ENCODE measurements at regions of chr19 and their contacts with region 1.

Region 1: DNA sequence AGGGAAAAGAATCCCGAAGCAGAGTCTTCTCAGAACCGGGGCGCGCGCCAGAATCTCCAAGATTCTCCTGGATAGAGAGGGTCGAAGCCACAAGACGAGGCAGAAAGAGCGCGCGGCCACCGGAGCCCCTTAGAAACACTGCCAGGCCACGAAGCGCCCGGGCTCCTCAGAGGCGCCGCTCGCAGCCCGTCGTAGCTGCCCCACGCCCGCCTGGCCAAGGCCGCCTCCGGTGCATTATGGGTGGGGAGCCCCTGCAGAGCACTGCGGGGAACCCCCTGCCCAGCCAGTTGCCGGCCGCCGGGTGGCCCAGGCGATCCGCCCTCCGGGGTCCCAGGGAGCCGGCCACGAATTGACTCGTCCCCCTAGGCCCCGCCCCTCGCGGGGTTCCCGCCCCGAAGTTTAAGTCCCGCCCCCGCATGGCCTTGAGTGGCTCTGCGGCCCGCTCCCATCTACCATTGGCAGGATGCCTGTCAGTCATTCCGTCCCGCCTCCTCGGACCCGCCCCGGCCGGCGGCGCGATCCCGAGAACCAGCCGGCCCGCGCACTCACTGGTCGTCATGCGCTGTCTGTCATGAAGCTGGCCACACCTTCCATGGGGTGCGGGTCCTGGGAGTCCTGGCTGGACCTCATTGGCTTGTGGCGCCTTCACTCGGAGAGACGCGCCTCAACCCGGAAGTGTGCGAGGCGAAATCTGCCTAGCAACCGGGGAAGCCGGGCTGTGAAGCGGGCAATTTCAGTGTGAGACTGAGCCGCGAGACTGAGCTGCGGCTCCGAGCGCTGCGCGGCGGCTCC is 20.2 kb upstream of the GATAD2A start:
- DNase-seq: peak; percentile 100
- H3K4me3 ChIP-seq: peak overlapping the region; percentile 81 to 82
- H3K27ac ChIP-seq: peak overlapping the region; percentile 58 to 71
- H3K4me1 ChIP-seq: peaks cover 10% of the 10 kb centered on the region
- H3K27me3 ChIP-seq: no peaks in the 10 kb centered on the region
- CTCF ChIP-seq: peak in 3 of 4 experiments; percentile 9 to 52 (median 40)
- POLR2A ChIP-seq: peak; percentile 45

Region 2: GRCh38 chr19:19404879-19405860 is 19.9 kb after region 1 on chr19 and contains the start of gene GATAD2A:
- intact Hi-C with region 1: loop called (anchors 1 kb)
- DNase-seq: peak; percentile 95
- H3K4me3 ChIP-seq: peak within 1 kb of the TSS; percentile 80 to 87
- H3K27ac ChIP-seq: peak within 1 kb of the TSS; percentile 65 to 79
- H3K4me1 ChIP-seq: peaks cover 5% of the 10 kb centered on the region
- H3K27me3 ChIP-seq: no peaks in the 10 kb centered on the region
- CTCF ChIP-seq: peak in 2 of 4 experiments; percentile 38 to 58
- POLR2A ChIP-seq: peak; percentile 50
- total RNA-seq, gene GATAD2A: 41.7 to 138 TPM

Region 3: GRCh38 chr19:19444681-19445155 is 59.4 kb after region 1 on chr19:
- intact Hi-C with region 1: no loop called
- DNase-seq: no peak
- H3K4me3 ChIP-seq: no peak overlapping the region
- H3K27ac ChIP-seq: no peak overlapping the region
- H3K4me1 ChIP-seq: no peaks in the 10 kb centered on the region
- H3K27me3 ChIP-seq: no peaks in the 10 kb centered on the region
- CTCF ChIP-seq: no peak
- POLR2A ChIP-seq: no peak